Breast epithelium (tissue), 4 donors: ENCODE measurements at regions of chr12 and their contacts with region 1.

Region 1: GRCh38 chr12:21276826-21277225 is 57.9 kb downstream of the SLCO1A2 start:
- DNase-seq: no peak
- H3K4me3 ChIP-seq: no peak overlapping the region
- H3K27ac ChIP-seq: no peak overlapping the region
- H3K4me1 ChIP-seq: no peaks in the 10 kb centered on the region
- H3K27me3 ChIP-seq: no peaks in the 10 kb centered on the region
- CTCF ChIP-seq: no peak
- POLR2A ChIP-seq: no peak

Region 2: DNA sequence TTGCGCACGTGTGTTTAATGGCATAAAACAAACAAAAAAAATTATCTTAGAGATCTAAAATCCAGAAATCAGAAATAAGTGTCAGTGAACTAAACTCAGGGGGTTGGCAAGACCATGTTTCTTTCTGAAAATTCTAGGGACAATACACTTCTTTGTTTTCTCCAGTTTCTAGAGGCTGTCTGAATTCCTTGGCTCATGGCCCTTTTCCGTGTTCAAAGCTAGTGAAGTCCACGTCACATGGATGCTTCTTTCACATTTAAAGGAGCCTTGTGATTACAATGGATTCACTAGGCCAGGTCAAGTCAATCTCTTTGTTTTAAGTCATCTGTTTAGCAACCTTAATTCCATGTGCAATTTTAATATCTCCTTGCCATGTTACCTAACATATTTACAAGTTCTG is 443.9 kb before region 1 on chr12:
- intact Hi-C with region 1: no loop called
- DNase-seq: peak in 1 of 2 donors; percentile 52
- H3K4me3 ChIP-seq: no peak overlapping the region
- H3K27ac ChIP-seq: peak overlapping the region; percentile 57 to 79
- H3K4me1 ChIP-seq: no peaks in the 10 kb centered on the region
- H3K27me3 ChIP-seq: no peaks in the 10 kb centered on the region
- CTCF ChIP-seq: no peak
- POLR2A ChIP-seq: no peak

Region 3: DNA sequence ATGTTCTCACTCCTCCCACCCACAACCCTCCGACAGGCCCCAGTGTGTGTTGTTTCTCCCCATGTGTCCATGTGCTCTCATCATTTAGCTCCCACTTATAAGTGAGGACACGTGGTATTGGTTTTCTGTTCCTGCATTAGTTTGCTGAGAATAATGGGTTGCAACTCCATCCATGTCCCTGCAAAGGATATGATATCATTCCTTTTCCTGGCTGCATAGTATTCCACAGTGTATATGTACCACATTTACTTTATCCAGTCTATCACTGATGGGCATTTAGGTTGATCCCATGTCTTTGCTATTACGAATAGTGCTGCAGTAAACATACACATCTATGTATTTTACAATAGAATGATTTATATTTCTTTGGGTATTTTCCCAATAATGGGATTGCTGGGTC is 19.7 kb before region 1 on chr12:
- intact Hi-C with region 1: loop called (anchors 2 kb)
- DNase-seq: no peak
- H3K4me3 ChIP-seq: no peak overlapping the region
- H3K27ac ChIP-seq: no peak overlapping the region
- H3K4me1 ChIP-seq: no peaks in the 10 kb centered on the region
- H3K27me3 ChIP-seq: no peaks in the 10 kb centered on the region
- CTCF ChIP-seq: no peak
- POLR2A ChIP-seq: no peak

Region 4: DNA sequence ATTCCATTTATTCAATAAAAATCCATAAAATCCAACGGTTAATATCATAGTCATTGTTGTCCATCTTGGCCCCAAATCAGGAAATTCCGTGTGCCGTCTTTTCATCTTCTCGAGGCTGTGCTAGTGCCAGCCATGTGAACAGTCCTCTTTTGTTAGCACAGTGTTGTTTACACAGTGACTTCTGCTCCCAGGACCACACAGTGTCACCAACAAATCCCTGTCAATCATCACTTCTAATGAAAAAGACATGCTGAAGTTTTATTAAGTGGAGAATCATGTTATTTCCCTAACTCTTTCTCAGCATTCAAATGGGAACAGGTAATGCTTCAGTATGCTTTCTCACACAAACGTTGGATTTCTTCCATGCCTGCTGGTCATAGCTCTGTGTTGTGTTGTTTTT is 59.8 kb after region 1 on chr12:
- intact Hi-C with region 1: no loop called
- DNase-seq: no peak
- H3K4me3 ChIP-seq: no peak overlapping the region
- H3K27ac ChIP-seq: no peak overlapping the region
- H3K4me1 ChIP-seq: no peaks in the 10 kb centered on the region
- H3K27me3 ChIP-seq: no peaks in the 10 kb centered on the region
- CTCF ChIP-seq: no peak
- POLR2A ChIP-seq: no peak